Heart left ventricle (tissue), 16 donors: ENCODE measurements at regions of chrX and their contacts with region 1.

Region 1: GRCh38 chrX:134753718-134754008 is 95.4 kb upstream of the PLAC1 start:
- DNase-seq: no peak
- ATAC-seq: peak in 3 of 4 donors; percentile 39 to 50 (median 49)
- H3K4me3 ChIP-seq: no peak overlapping the region
- H3K27ac ChIP-seq: no peak overlapping the region
- H3K4me1 ChIP-seq: no peaks in the 10 kb centered on the region
- H3K27me3 ChIP-seq: peaks cover 0 to 7% (median 0%) of the 10 kb centered on the region in 9 donors
- CTCF ChIP-seq: peak in 11 of 12 donors; percentile 13 to 56 (median 43)
- POLR2A ChIP-seq: no peak

Region 2: DNA sequence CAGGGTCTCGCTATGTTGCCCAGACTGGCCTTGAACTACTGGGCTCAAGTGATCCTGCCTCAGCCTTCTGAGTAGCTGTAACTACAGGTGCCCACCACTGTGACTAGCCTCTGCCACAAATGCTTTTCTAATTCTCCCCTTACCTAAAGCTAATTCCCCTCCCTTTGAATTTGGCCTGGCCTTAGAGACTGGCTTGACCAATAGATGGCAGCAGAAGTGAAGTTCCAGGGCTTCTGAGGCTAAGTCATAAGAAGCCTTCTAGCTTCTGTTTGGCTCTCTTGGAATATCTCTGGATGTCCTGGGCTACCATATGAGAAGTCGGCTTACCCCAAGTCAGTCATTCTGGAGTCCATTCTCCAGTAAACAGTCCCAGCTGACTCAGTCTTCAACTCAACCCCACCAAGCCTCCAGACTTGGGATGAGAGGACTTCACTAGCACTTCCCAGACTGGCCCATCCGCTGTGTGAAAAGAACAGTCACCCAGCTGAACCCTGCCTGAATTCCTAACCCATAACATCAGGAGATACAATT is 232.7 kb before region 1 on chrX:
- intact Hi-C with region 1: loop called (anchors 1 to 10 kb)
- DNase-seq: peak in 1 of 5 donors; percentile 21
- ATAC-seq: peak; percentile 69 to 82 (median 74)
- H3K4me3 ChIP-seq: no peak overlapping the region
- H3K27ac ChIP-seq: no peak overlapping the region
- H3K4me1 ChIP-seq: no peaks in the 10 kb centered on the region
- H3K27me3 ChIP-seq: no peaks in the 10 kb centered on the region
- CTCF ChIP-seq: peak; percentile 39 to 69 (median 56)
- POLR2A ChIP-seq: no peak

Region 3: GRCh38 chrX:134880866-134881265 is 127.2 kb after region 1 on chrX:
- intact Hi-C with region 1: no loop called
- DNase-seq: no peak
- ATAC-seq: no peak
- H3K4me3 ChIP-seq: no peak overlapping the region
- H3K27ac ChIP-seq: no peak overlapping the region
- H3K4me1 ChIP-seq: no peaks in the 10 kb centered on the region
- H3K27me3 ChIP-seq: peaks cover 0 to 4% (median 0%) of the 10 kb centered on the region in 9 donors
- CTCF ChIP-seq: no peak
- POLR2A ChIP-seq: no peak